PC-9 (cell line): ENCODE measurements at regions of chr12 and their contacts with region 1.

Region 1: GRCh38 chr12:53054112-53054833 is 4.4 kb downstream of the TNS2 start:
- DNase-seq: peak; percentile 87 to 94
- H3K4me3 ChIP-seq: peak overlapping the region; percentile 95
- H3K27ac ChIP-seq: peak overlapping the region; percentile 71
- H3K4me1 ChIP-seq: peaks cover 19% of the 10 kb centered on the region
- H3K27me3 ChIP-seq: no peaks in the 10 kb centered on the region
- CTCF ChIP-seq: no peak

Region 2: DNA sequence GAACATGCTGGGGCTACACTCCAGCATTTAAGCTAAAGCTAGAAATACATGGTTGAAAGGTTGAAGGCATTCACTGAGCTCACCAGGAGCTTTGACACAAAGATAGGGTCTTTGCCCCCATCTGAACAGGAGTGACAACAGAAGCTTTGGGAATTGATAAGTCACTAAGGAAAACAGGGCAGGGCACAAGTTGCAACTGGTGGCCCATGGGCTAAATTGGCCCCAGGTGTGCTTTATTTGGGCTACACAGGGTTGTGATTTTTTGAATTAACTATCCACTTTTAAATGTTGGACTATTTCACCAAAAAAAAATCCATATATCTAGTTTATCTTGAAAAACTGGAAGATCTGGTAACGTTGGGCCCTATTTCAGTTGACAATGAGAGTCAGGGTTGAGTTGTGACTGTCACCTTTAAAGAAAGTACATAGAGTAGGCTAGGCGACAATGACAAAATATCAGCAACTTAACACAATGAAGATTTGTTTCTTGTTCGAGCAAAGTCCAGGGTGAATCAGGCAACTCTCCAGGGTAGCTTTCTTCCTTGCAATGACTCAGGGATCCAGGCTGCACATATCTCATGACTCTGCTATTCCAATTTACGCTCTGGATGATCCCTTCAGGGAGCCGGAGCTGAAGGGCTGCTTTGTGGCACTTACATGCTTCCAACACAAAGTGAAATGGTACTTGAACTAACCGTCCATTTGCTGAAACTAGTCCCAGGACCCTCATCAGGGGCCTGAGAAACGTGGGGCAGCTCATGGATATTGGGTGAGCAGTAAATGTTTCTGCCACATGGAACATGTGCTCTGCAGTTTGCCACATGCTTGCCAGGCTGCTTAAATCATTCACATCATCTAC is 61.3 kb before region 1 on chr12:
- CTCF ChIA-PET with region 1: interaction called, 11 read pairs
- POLR2A ChIA-PET with region 1: no interaction called
- intact Hi-C with region 1: no loop called
- DNase-seq: peak; percentile 43 to 85
- H3K4me3 ChIP-seq: peak overlapping the region; percentile 18; the same call in 1 of the 2 replicates
- H3K27ac ChIP-seq: peak overlapping the region; percentile 90
- H3K4me1 ChIP-seq: peaks cover 35% of the 10 kb centered on the region
- H3K27me3 ChIP-seq: no peaks in the 10 kb centered on the region
- CTCF ChIP-seq: no peak

Region 3: GRCh38 chr12:53071591-53072551 is 17.6 kb after region 1 on chr12:
- CTCF ChIA-PET with region 1: interaction called, 22 read pairs
- POLR2A ChIA-PET with region 1: no interaction called
- intact Hi-C with region 1: no loop called
- DNase-seq: no peak
- H3K4me3 ChIP-seq: no peak overlapping the region
- H3K27ac ChIP-seq: no peak overlapping the region
- H3K4me1 ChIP-seq: peaks cover under 1% of the 10 kb centered on the region; the same call in 1 of the 2 replicates
- H3K27me3 ChIP-seq: no peaks in the 10 kb centered on the region
- CTCF ChIP-seq: no peak

Region 4: GRCh38 chr12:53295070-53295890 is 241.0 kb after region 1 on chr12 and contains the start of gene PFDN5:
- CTCF ChIA-PET with region 1: interaction called, 3 read pairs
- POLR2A ChIA-PET with region 1: interaction called, 3 read pairs
- intact Hi-C with region 1: loop called (anchors 5 kb)
- DNase-seq: peak; percentile 71 to 83
- H3K4me3 ChIP-seq: peak within 1 kb of the TSS; percentile 98
- H3K27ac ChIP-seq: peak within 1 kb of the TSS; percentile 38
- H3K4me1 ChIP-seq: peaks cover 40% of the 10 kb centered on the region
- H3K27me3 ChIP-seq: no peaks in the 10 kb centered on the region
- CTCF ChIP-seq: no peak
- total RNA-seq, gene PFDN5: 291 and 303 TPM in 2 replicates

Region 5: DNA sequence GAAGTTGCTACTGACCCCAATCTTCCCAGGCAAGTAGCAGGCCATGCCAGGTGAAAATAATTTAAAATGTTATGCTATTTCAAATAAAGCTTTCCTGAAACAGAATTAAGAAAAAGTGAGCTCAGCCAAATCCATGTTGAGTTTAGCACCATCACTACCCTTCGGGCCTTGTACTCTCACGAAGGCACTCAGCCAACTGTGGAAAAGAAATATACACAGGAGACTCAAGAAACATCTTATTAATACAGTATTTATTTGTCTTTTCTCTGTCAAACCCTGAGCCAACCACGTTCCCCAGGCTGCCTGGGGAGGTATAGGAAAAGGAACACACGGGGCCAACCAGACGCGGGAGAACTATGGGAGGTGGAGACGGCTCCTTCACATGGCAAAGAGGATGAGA is 610.7 kb after region 1 on chr12:
- CTCF ChIA-PET with region 1: no interaction called
- POLR2A ChIA-PET with region 1: interaction called, 26 read pairs
- intact Hi-C with region 1: no loop called
- DNase-seq: no peak
- H3K4me3 ChIP-seq: no peak overlapping the region
- H3K27ac ChIP-seq: no peak overlapping the region
- H3K4me1 ChIP-seq: no peaks in the 10 kb centered on the region
- H3K27me3 ChIP-seq: no peaks in the 10 kb centered on the region
- CTCF ChIP-seq: no peak

Region 6: GRCh38 chr12:53867216-53868001 is 813.1 kb after region 1 on chr12:
- CTCF ChIA-PET with region 1: no interaction called
- POLR2A ChIA-PET with region 1: no interaction called
- intact Hi-C with region 1: no loop called
- DNase-seq: peak; percentile 93
- H3K4me3 ChIP-seq: no peak overlapping the region
- H3K27ac ChIP-seq: peak overlapping the region; percentile 88
- H3K4me1 ChIP-seq: peaks cover 49% of the 10 kb centered on the region
- H3K27me3 ChIP-seq: no peaks in the 10 kb centered on the region
- CTCF ChIP-seq: no peak